ENCODE measurements at regions of chr19 and their contacts with region 1.

Region 1: DNA sequence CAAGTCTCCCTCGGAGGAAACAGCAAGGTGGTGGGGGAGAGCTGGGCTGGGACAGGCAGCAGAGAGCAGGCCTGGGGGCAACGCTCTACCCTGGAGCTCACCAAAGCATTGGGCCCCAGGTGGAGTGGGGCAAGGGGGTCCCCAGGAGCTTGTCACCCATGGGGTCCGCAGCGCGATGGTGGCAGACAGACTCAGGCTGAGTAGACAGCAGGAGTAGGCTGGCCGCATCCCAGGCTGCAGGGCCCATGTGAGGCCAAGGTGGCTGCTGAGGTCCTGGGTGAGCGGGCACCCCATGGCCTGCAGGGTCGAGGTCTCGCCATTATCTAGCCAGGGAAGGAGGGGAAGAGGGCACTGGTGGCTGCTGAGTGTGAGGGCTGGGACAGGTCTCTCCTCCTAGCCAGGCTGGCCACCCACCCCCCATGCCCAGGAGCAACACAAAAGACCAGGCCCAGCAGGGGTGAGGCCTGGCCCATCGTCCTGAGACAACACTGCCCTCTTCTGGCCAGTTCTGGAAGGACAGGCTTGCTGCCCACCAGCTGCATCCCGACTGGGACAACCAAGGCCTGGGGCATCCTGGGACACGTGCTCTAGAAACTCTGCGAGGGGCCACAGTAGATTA is 33.1 kb downstream of the CEBPG start:
- DNase-seq: peak; percentile 82 to 90
- H3K4me3 ChIP-seq: no peak overlapping the region
- H3K4me3 Mint-ChIP-seq: no peak overlapping the region
- H3K27ac Mint-ChIP-seq: peak overlapping the region; percentile 84
- H3K4me1 ChIP-seq: peaks cover 35% of the 10 kb centered on the region
- H3K4me1 Mint-ChIP-seq: peaks cover 31% of the 10 kb centered on the region
- H3K27me3 ChIP-seq: no peaks in the 10 kb centered on the region
- H3K27me3 Mint-ChIP-seq: no peaks in the 10 kb centered on the region
- CTCF ChIP-seq: peak; percentile 90 to 96

Region 2: DNA sequence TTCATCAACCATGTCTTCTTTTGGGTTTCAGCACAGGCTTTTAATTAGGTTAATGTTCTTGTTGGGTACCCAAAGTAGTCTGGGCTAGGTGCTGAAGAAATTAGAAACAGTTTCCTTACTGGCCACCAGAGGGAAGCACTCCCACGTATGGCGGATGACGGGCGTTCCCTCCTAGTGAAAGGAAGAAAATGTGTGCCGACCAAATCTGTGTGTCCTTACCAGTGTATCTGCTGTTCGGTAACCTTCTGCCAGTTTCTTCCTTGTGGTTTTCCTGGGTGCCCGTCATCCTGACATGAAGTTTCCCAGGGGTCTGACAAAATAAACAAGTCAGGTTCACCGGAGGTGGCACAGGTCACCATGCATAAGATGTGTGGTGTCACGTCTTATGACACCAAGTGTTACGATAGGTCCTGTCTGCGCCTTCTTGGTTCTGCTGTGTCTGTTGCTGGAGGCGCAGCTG is 280.7 kb before region 1 on chr19:
- CTCF ChIA-PET with region 1: no interaction called
- POLR2A ChIA-PET with region 1: no interaction called
- intact Hi-C with region 1: loop called (anchors 5 kb)
- DNase-seq: peak in 1 of 2 experiments; percentile 66
- H3K4me3 ChIP-seq: no peak overlapping the region
- H3K4me3 Mint-ChIP-seq: no peak overlapping the region
- H3K27ac Mint-ChIP-seq: no peak overlapping the region
- H3K4me1 ChIP-seq: peaks cover 8% of the 10 kb centered on the region
- H3K4me1 Mint-ChIP-seq: peaks cover 10% of the 10 kb centered on the region
- H3K27me3 ChIP-seq: no peaks in the 10 kb centered on the region
- H3K27me3 Mint-ChIP-seq: no peaks in the 10 kb centered on the region
- CTCF ChIP-seq: peak; percentile 88 to 91

Region 3: GRCh38 chr19:33235269-33235995 is 171.2 kb before region 1 on chr19:
- CTCF ChIA-PET with region 1: interaction called, 33 read pairs
- POLR2A ChIA-PET with region 1: interaction called, 3 read pairs
- intact Hi-C with region 1: loop called (anchors 1 kb)
- DNase-seq: peak; percentile 89 to 92
- H3K4me3 ChIP-seq: no peak overlapping the region
- H3K4me3 Mint-ChIP-seq: no peak overlapping the region
- H3K27ac Mint-ChIP-seq: no peak overlapping the region
- H3K4me1 ChIP-seq: 0 out of 2 replicates have a peak, but pooled peaks cover 4% of the 10 kb centered on the region
- H3K4me1 Mint-ChIP-seq: no peaks in the 10 kb centered on the region
- H3K27me3 ChIP-seq: no peaks in the 10 kb centered on the region
- H3K27me3 Mint-ChIP-seq: peaks cover 2% of the 10 kb centered on the region
- CTCF ChIP-seq: peak; percentile 92 to 97

Region 4: DNA sequence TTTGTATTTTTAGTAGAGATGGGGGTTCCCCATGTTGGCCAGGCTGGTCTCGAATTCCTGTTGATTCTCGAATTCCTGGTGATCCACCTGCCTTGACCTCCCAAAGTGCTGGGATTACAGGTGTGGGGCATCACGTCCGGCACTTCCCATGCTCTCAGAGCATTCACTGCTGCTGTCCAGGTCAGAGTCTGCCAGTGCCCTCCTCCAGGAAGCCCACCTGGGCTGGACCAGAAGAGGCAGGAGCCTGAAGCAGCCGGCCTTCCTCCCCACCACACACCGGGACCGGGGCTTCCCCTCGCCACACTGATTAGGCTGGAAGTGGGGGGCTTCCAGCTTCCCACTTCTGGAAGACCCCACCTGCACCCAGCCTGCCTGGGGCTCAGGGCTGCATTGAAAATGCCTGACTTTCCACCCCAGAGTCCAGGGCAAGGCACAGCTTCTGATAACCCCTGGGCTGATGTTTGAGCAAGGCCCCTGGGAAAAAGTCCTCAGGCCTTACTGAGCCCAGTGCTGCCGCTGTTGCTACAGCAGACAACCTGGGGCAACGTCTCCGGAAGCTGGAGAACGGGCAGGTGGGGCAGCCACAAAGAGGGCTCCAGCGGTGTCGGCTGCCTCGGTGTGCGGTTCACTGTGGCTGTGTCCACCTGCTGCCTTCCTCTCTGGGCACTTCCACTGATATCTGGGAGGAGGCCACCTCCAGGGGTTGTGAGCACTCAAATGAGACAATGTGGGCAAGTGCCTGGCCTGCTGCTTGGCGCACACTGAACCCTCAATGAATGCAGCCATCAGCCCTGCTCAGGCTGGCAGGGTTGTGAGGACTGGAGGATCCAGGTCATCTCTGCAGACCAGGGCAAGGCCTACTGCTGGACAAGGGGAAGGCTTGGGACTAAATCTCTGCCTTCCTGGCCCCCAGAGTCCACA is 126.9 kb before region 1 on chr19:
- CTCF ChIA-PET with region 1: no interaction called
- POLR2A ChIA-PET with region 1: interaction called, 4 read pairs
- intact Hi-C with region 1: loop called (anchors 1 kb)
- DNase-seq: peak; percentile 51 to 69
- H3K4me3 ChIP-seq: no peak overlapping the region
- H3K4me3 Mint-ChIP-seq: no peak overlapping the region
- H3K27ac Mint-ChIP-seq: peak overlapping the region; percentile 97
- H3K4me1 ChIP-seq: peaks cover 65% of the 10 kb centered on the region
- H3K4me1 Mint-ChIP-seq: peaks cover 27% of the 10 kb centered on the region
- H3K27me3 ChIP-seq: no peaks in the 10 kb centered on the region
- H3K27me3 Mint-ChIP-seq: no peaks in the 10 kb centered on the region
- CTCF ChIP-seq: no peak

Region 5: DNA sequence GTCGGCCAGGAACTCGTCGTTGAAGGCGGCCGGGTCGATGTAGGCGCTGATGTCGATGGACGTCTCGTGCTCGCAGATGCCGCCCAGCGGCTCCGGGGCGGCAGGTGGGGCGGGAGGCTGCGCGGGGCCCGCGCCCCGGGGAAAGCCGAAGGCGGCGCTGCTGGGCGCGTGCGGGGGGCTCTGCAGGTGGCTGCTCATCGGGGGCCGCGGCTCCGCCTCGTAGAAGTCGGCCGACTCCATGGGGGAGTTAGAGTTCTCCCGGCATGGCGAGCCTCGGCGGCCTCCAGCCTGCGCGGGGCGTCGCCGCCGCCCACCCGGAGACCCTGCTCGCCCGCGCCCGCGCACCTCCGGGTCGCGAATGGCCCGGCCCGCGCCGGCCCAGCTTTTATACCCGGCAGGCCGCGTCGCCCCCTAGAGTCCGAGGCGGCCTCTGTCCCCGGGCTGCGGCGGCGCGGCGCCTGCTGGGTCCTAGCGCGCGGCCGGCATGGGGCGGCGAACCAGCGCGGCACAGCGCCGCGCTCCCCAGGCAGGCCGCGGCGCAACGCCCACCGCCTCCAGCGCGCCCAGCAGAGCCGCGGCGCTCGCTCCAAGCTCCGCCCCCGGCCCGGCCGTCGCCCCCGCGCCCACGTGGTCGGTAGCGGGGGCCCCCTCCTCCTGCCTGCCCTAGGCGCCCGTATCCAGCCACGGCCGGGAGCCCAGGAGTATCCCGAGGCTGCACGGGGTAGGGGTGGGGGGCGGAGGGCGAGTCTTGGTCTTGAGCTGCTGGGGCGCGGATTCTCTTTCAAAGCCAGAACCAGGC is 104.3 kb before region 1 on chr19 and contains the start of gene CEBPA:
- CTCF ChIA-PET with region 1: interaction called, 9 read pairs
- POLR2A ChIA-PET with region 1: interaction called, 21 read pairs
- intact Hi-C with region 1: loop called (anchors 1 kb)
- DNase-seq: peak; percentile 90 to 97
- H3K4me3 ChIP-seq: peak within 1 kb of the TSS; percentile 87
- H3K4me3 Mint-ChIP-seq: peak within 1 kb of the TSS; percentile 85
- H3K27ac Mint-ChIP-seq: peak within 1 kb of the TSS; percentile 73
- H3K4me1 ChIP-seq: peaks cover 55% of the 10 kb centered on the region
- H3K4me1 Mint-ChIP-seq: peaks cover 49% of the 10 kb centered on the region
- H3K27me3 ChIP-seq: no peaks in the 10 kb centered on the region
- H3K27me3 Mint-ChIP-seq: no peaks in the 10 kb centered on the region
- CTCF ChIP-seq: peak; percentile 63 to 75
- total RNA-seq, gene CEBPA: 97.9 and 110 TPM in 2 replicates

Region 6: DNA sequence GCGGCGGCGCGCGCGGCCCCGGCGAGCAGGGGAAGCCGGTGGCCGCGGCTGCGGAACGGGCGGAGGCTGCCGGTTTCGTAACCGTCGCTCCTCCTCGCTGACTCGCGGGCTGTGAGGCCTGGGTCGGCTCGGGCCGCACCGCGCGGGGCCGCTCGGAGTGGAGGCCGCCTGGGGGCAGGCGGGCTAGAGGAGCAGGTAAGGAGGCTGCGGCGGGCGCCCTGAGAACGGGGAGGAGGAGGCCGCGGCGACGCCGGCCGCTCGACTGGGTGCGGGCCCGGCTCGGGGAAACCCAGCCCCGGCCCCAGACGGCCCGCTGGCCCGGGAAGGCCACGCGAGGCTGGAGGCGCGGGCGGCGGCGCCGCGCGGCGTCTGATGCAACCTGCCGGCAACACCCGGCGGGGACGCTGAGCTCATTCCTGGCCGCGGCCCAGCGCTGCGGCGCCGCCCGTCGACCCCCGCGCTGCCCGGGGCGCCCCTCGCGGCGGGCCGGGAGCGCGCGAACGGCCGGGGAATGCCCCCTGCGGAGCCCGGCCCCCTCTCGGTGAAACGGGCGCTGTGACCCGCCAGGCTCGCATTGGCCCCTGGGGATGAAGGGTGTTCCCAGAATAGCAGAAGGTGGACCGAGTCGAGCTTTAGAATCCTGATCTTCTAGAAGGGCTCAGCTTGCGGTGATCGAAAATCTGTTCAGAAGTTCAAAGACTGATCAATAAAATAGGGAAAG is 32.8 kb before region 1 on chr19 and contains the start of gene CEBPG:
- CTCF ChIA-PET with region 1: interaction called, 18 read pairs
- POLR2A ChIA-PET with region 1: interaction called, 20 read pairs
- intact Hi-C with region 1: loop called (anchors 1 kb)
- DNase-seq: peak; percentile 66 to 90
- H3K4me3 ChIP-seq: peak within 1 kb of the TSS; percentile 65
- H3K4me3 Mint-ChIP-seq: peak within 1 kb of the TSS; percentile 93
- H3K27ac Mint-ChIP-seq: peak within 1 kb of the TSS; percentile 95
- H3K4me1 ChIP-seq: peaks cover 28% of the 10 kb centered on the region
- H3K4me1 Mint-ChIP-seq: peaks cover 26% of the 10 kb centered on the region
- H3K27me3 ChIP-seq: no peaks in the 10 kb centered on the region
- H3K27me3 Mint-ChIP-seq: no peaks in the 10 kb centered on the region
- CTCF ChIP-seq: peak; percentile 22 to 62
- total RNA-seq, gene CEBPG: 74.9 and 79.4 TPM in 2 replicates

Measured in Caco-2 (cell line).